Transverse colon (tissue), 4 donors: ENCODE measurements at regions of chr2 and their contacts with region 1.

Region 1: GRCh38 chr2:118003396-118003824 is 10.5 kb downstream of the CCDC93 start:
- DNase-seq: peak; percentile 44
- H3K4me3 ChIP-seq: no peak overlapping the region
- H3K27ac ChIP-seq: no peak overlapping the region
- H3K4me1 ChIP-seq: peaks cover 0 to 5% (median 2%) of the 10 kb centered on the region in 4 donors
- H3K27me3 ChIP-seq: no peaks in the 10 kb centered on the region
- CTCF ChIP-seq: peak; percentile 79 to 88 (median 86)
- EP300 ChIP-seq: no peak
- POLR2A ChIP-seq: no peak

Region 2: DNA sequence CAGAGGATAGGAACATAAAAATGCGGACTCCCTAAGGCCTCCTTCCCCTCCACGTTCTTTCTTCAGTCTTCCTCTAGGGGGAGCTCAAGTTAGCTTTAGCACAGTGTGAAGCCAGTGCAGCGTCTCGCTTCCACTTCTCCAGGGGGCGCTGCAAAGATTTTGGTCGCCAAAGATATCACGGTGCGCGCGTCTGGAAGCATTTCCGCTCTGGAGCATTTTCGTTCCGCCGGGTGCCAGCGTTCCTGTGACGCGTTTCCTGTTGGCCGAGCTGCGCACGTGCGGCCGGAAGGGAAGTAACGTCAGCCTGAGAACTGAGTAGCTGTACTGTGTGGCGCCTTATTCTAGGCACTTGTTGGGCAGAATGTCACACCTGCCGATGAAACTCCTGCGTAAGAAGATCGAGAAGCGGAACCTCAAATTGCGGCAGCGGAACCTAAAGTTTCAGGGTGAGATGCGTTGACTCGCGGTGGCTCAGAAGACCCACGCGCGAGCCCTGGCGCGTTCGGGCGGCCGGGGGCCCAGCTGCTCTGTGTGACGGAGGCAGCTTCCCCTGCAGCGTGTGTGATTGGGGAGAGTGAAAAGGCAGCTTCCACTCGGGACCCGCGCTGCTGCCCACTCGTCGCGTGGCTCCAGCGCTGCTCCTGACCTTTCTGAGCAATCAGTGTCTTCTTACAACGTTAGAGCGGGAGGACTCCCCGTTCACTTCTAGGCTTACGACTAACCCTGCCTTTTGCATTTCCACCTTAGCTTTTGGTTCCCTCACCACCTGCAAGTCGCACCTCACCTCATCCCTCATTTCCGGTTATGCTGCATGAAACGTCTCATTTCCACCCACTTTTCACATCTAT is 188.8 kb before region 1 on chr2 and contains the start of gene DDX18:
- in situ Hi-C with region 1: loop called in 1 of 4 experiments (anchors 10 kb)
- intact Hi-C with region 1: no loop called
- DNase-seq: peak; percentile 98
- H3K4me3 ChIP-seq: peak within 1 kb of the TSS; percentile 49 to 88 (median 82)
- H3K27ac ChIP-seq: peak within 1 kb of the TSS; percentile 85 to 92 (median 90)
- H3K4me1 ChIP-seq: peaks cover 9 to 19% (median 14%) of the 10 kb centered on the region in 4 donors
- H3K27me3 ChIP-seq: no peaks in the 10 kb centered on the region
- CTCF ChIP-seq: peak; percentile 96 to 99 (median 98)
- EP300 ChIP-seq: no peak
- POLR2A ChIP-seq: peak; percentile 68
- total RNA-seq, gene DDX18: 28.4 to 484 (median 43.5) TPM

Region 3: GRCh38 chr2:117820444-117820843 is 183.0 kb before region 1 on chr2:
- in situ Hi-C with region 1: loop called in 3 of 4 experiments (anchors 5 to 10 kb)
- intact Hi-C with region 1: no loop called
- DNase-seq: no peak
- H3K4me3 ChIP-seq: no peak overlapping the region
- H3K27ac ChIP-seq: no peak overlapping the region
- H3K4me1 ChIP-seq: peaks cover 7 to 16% (median 12%) of the 10 kb centered on the region in 4 donors
- H3K27me3 ChIP-seq: no peaks in the 10 kb centered on the region
- CTCF ChIP-seq: no peak
- EP300 ChIP-seq: no peak
- POLR2A ChIP-seq: no peak

Region 4: DNA sequence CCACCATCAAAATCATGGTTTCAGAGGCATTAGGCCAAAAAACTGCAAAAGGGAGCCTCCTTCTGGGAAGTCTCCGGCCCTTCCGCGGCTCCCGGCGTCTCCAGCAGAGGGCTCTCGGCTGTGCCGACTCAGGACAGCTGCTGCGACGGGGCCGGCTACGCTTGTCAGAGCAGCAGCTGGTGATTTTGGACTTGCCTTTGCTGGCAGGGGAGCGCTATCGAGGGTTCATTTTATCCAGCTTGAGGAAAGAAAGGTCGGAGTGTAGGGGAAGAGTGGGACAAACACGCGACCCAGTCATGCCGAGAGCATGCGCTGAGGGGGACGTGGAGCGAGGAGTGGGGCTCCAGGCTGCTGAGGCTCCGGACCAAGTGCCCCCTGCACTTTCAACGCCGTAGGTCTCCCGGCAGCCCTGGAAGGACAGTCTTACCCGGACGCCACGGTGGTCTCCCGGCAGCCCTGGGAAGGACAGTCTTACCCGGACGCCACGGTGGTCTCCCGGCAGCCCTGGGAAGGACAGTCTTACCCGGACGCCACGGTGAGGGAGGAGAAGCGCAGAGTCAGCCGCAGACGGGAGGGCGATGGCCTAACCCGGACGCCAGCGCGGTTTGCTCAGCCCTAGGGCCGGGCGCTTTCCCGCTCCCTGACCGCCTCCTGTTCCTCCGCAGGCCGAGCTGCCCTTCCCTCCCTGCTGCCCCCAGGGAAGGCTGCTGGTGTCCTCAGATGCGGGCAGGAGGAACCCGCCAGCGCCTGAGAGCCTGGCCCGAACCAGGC is 167.2 kb before region 1 on chr2:
- in situ Hi-C with region 1: loop called in 1 of 4 experiments (anchors 5 kb)
- intact Hi-C with region 1: loop called (anchors 10 kb)
- DNase-seq: peak; percentile 72
- H3K4me3 ChIP-seq: peak overlapping the region; percentile 23 to 52 (median 35)
- H3K27ac ChIP-seq: peak overlapping the region; percentile 1 to 72 (median 34)
- H3K4me1 ChIP-seq: peaks cover 0 to 9% (median 3%) of the 10 kb centered on the region in 4 donors
- H3K27me3 ChIP-seq: no peaks in the 10 kb centered on the region
- CTCF ChIP-seq: peak; percentile 65 to 75 (median 71)
- EP300 ChIP-seq: no peak
- POLR2A ChIP-seq: no peak

Region 5: DNA sequence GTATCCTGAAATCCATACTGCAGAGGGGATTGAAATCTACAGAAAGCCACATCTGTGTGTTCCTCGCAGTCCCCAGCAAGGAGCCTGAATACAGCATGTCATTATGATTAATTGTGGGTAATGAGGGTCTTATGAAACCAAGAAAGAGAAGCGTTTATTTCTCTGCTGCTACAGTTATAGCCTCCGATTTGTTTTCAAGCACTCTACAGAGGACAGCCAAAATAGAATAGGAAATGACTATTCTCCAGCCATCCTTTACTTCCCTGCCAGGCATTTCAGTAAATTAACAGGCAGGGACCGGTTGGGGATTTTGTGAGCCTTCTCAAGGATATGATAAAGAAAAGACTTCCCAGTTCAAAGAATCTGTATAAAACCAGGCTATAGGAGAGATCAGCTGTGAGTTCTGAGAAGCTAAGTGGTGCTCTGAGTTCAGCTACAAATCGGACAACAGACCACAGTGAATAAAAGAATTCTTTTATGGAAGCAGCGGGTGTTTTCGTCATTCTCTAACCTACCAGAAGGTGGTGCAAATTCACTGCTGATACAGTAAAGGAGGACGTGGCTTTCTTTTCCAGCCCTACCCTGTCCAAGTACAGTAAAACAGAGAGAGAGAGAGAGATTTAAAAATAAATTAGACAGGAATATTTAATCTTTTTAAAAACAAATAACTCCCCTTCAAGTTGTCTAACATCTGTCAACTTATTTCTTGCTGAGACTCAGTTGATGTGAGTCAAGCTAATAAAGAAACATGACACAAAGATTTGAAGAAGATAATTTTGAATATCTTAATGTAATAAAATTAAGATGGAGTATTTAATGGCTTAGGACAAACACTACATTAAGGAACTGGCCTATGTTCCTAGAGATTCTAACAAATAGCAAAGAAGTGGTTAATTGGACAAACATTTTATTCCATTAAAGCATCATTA is 218.5 kb after region 1 on chr2:
- in situ Hi-C with region 1: no loop called
- intact Hi-C with region 1: no loop called
- DNase-seq: no peak
- H3K4me3 ChIP-seq: no peak overlapping the region
- H3K27ac ChIP-seq: no peak overlapping the region
- H3K4me1 ChIP-seq: peaks cover 0 to 17% (median 10%) of the 10 kb centered on the region in 4 donors
- H3K27me3 ChIP-seq: peaks cover 100% of the 10 kb centered on the region
- CTCF ChIP-seq: peak; percentile 58 to 71 (median 62)
- EP300 ChIP-seq: no peak
- POLR2A ChIP-seq: no peak